ENCODE measurements at regions of chr1 and their contacts with region 1.

Region 1: DNA sequence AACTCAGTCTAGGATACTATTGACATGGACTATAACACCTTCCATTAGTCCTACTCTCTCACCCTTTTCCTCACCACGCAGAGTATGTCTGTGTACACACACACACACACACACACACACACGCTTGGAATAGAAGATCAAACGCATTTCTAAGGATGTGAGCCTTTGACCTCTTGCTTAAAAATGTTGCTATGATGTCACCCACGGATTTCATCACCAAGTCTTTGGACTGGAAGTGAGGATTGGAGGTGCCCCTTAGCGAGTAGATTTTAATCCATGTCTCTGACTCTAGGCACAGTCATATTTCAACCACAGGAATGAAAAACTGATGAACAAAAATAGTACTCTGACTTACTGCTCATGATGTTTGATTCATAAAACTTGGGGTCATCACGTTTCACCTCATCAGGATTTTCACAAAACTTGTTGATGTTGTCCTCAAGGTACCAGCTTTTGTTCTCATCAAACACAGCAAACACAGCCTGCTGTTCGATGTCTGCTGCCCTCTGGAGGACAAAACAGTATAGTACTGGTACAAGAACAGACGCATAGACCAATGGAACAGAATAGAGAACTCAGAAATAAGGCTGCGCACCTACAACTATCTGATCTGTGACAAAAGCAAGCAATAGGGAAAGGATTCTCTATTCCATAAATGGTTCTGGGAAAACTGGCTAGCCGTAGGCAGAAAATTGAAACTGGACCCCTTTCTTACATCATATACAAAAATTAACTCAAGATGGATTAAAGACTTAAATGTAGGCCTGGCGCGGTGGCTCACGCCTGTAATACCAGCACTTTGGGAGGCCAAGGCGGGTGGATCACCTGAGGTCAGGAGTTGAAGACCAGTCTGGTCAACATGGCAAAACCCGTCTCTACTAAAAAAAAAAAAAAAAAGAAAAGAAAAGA is 39.9 kb downstream of the F5 start:
- DNase-seq: no peak
- ATAC-seq: peak; percentile 78
- H3K4me3 Mint-ChIP-seq: no peak overlapping the region
- H3K27ac Mint-ChIP-seq: no peak overlapping the region
- H3K4me1 Mint-ChIP-seq: no peaks in the 10 kb centered on the region
- H3K27me3 Mint-ChIP-seq: peaks cover 3% of the 10 kb centered on the region
- CTCF ChIP-seq: peak; percentile 73

Region 2: DNA sequence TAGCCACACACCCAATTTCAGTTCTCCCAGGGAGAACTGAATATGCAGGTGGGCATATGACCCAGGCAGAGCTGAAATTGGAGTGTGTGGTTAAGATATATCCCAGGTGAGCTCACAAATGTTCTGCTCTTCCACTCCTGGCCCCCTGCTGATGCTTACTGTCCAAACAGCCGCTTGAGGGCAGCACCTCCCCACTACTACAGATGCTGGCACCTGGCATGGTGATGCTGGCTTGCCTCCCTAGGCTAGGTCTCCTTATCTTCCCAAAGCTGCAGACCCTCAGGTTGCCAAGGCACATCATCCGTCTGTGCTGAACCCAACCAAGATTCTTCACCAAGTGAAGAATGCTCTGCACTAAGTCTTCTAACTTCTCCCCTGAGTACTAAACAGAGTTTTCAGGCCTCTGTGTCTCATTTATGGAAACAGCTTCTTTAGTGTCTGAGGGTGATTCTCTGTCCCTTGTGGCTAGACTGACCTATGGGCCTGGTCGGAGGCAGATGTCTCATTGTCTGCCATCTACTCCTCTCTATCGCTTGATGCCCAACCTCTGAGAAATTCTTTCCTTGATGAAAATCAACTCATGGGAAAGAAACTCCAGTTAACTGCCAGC is 942.7 kb before region 1 on chr1:
- CTCF ChIA-PET with region 1: interaction called, 12 read pairs
- POLR2A ChIA-PET with region 1: no interaction called
- intact Hi-C with region 1: no loop called
- DNase-seq: peak; percentile 31
- ATAC-seq: peak; percentile 45
- H3K4me3 Mint-ChIP-seq: no peak overlapping the region
- H3K27ac Mint-ChIP-seq: no peak overlapping the region
- H3K4me1 Mint-ChIP-seq: no peaks in the 10 kb centered on the region
- H3K27me3 Mint-ChIP-seq: peaks cover 8% of the 10 kb centered on the region
- CTCF ChIP-seq: no peak

Region 3: GRCh38 chr1:169466259-169467230 is 79.8 kb before region 1 on chr1:
- CTCF ChIA-PET with region 1: interaction called, 10 read pairs
- POLR2A ChIA-PET with region 1: no interaction called
- intact Hi-C with region 1: loop called (anchors 1 kb)
- DNase-seq: no peak
- ATAC-seq: no peak
- H3K4me3 Mint-ChIP-seq: no peak overlapping the region
- H3K27ac Mint-ChIP-seq: no peak overlapping the region
- H3K4me1 Mint-ChIP-seq: no peaks in the 10 kb centered on the region
- H3K27me3 Mint-ChIP-seq: no peaks in the 10 kb centered on the region
- CTCF ChIP-seq: no peak